ENCODE measurements at regions of chr15 and their contacts with region 1.

Region 1: GRCh38 chr15:101258238-101259144 is 6.6 kb upstream of the CHSY1 start:
- DNase-seq: peak; percentile 51
- ATAC-seq: peak; percentile 88
- H3K4me3 ChIP-seq: no peak overlapping the region
- H3K27ac ChIP-seq: no peak overlapping the region
- H3K4me1 ChIP-seq: peaks cover 9% of the 10 kb centered on the region
- H3K27me3 ChIP-seq: no peaks in the 10 kb centered on the region
- CTCF ChIP-seq: peak; percentile 76 to 95 (median 92); a peak in 5 of 6 replicates
- EP300 ChIP-seq: peak in 1 of 2 experiments; percentile 70; a peak in 2 of 4 replicates
- POLR2A ChIP-seq: no peak
- RAD21 ChIP-seq: peak; percentile 97

Region 2: DNA sequence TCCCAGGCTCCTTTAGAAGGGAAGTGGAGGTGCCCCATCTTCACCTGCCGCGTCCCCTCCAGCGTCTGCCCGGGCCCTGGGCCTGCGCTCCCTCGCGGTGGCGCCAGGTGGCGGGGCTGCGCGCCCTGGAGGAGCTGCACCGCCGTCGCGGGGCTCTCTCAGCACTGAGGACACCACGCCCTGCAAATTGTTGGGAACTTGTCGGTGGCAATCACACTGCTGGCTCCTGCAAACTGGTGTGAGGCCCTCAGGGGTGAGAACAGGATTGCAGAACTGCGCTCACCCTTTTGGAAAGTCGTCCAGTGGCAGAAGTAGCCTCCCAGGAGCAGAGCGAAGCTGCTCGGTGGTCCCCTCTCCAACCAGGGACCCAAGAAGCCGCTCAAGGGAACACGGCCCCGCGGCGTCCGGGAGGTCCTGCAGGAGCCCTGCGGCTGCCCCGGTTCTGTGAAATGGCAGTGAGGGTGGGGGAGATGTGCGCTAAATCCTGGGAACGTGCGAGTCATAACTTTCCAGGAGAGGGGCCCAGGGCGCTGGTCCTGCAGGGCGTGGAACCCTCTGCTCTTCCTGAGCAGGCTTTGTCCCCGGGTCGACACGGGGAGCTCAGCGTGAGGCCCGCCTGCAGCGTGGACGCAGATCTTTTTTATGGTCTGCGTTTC is 340.3 kb before region 1 on chr15:
- CTCF ChIA-PET with region 1: interaction called, 17 read pairs
- POLR2A ChIA-PET with region 1: no interaction called
- RAD21 ChIA-PET with region 1: interaction called, 4 read pairs
- SMC1A ChIA-PET with region 1: interaction called, 19 read pairs
- in situ Hi-C with region 1: loop called (anchors 5 kb)
- intact Hi-C with region 1: loop called (anchors 5 kb)
- DNase-seq: no peak
- ATAC-seq: peak; percentile 83
- H3K4me3 ChIP-seq: peak overlapping the region; percentile 89
- H3K27ac ChIP-seq: peak overlapping the region; percentile 83
- H3K4me1 ChIP-seq: peaks cover 21% of the 10 kb centered on the region
- H3K27me3 ChIP-seq: no peaks in the 10 kb centered on the region
- CTCF ChIP-seq: peak; percentile 93 to 98 (median 96)
- EP300 ChIP-seq: no peak
- POLR2A ChIP-seq: peak; percentile 46; the same call in 1 of the 2 replicates
- RAD21 ChIP-seq: peak; percentile 87

Region 3: DNA sequence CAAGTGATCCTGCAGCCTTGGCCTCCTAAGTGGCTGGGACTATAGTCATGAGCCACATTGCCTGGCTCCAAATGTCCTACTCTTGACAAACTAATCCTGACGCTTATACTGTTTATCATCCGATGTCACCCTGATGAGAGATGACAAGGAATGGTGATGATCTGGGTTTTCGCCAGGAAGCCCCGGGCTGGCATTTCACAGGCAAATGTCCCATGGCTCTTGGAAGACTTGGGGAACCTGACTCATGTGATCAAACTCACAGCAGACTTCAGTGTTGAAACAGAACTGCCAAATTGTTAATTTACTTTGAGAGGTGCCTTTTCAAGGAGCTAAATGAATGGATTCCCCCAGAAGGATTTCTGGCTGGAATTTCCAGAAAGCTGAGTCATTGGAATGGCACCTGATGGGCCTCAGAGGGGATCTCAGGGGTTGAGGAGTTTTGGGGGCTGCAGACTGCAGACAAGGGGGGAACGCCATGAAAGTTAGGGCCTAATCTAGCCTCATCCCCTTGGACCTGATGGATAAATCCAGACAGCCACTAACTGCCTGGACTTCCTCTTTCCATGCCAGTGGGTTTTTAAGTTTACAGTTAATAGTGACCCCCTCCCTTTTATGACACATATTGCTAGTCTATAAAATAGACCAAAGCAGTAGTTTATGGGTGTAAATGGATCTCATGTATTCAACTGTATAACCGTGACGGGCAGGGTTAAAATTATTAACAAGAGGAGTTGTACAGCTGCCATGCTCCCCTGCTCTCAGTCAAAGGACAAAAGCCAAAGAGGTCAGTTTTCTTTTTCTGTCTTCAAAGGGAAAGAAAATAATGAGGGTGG is 153.2 kb before region 1 on chr15:
- CTCF ChIA-PET with region 1: interaction called, 22 read pairs
- POLR2A ChIA-PET with region 1: interaction called, 4 read pairs
- RAD21 ChIA-PET with region 1: interaction called, 10 read pairs
- SMC1A ChIA-PET with region 1: interaction called, 5 read pairs
- in situ Hi-C with region 1: no loop called
- intact Hi-C with region 1: no loop called
- DNase-seq: no peak
- ATAC-seq: no peak
- H3K4me3 ChIP-seq: no peak overlapping the region
- H3K27ac ChIP-seq: no peak overlapping the region
- H3K4me1 ChIP-seq: no peaks in the 10 kb centered on the region
- H3K27me3 ChIP-seq: no peaks in the 10 kb centered on the region; a peak in 1 of 4 replicates
- CTCF ChIP-seq: no peak
- EP300 ChIP-seq: no peak
- POLR2A ChIP-seq: no peak
- RAD21 ChIP-seq: no peak

Region 4: DNA sequence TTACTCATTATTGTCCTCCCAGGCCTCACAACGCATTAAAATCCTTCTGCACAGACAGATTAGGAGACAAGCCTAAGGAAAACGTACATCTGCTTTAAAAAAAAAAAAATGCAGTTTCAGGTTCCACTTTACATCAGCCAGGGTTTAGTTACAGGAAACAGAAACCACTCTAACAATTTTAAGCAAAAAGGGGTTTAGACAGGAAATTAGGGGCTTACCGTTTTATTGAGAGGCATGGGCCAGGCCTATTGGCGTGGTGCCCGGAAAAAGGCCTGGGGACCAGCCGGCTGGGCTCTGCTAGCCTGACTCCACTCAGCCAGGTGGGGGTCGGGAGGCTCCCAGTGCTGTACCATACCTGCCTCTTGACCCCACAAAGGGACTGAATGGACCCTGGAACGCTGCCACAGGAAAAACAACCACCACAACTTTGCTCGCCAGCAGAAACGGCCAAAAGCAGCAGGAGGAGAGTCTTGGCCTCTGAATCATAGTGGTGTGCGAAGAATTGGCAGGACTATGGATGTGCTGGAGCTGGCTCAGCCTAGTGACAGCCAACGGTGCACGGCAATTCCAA is 130.9 kb before region 1 on chr15:
- CTCF ChIA-PET with region 1: interaction called, 60 read pairs
- POLR2A ChIA-PET with region 1: interaction called, 5 read pairs
- RAD21 ChIA-PET with region 1: interaction called, 12 read pairs
- SMC1A ChIA-PET with region 1: interaction called, 29 read pairs
- in situ Hi-C with region 1: no loop called
- intact Hi-C with region 1: no loop called
- DNase-seq: peak; percentile 82
- ATAC-seq: peak; percentile 80
- H3K4me3 ChIP-seq: peak overlapping the region; percentile 44; the same call in 1 of the 2 replicates
- H3K27ac ChIP-seq: peak overlapping the region; percentile 95
- H3K4me1 ChIP-seq: peaks cover 45% of the 10 kb centered on the region
- H3K27me3 ChIP-seq: no peaks in the 10 kb centered on the region; a peak in 1 of 4 replicates
- CTCF ChIP-seq: no peak
- EP300 ChIP-seq: peak; percentile 60 to 85; a peak in 2 of 4 replicates
- POLR2A ChIP-seq: no peak
- RAD21 ChIP-seq: no peak

Region 5: DNA sequence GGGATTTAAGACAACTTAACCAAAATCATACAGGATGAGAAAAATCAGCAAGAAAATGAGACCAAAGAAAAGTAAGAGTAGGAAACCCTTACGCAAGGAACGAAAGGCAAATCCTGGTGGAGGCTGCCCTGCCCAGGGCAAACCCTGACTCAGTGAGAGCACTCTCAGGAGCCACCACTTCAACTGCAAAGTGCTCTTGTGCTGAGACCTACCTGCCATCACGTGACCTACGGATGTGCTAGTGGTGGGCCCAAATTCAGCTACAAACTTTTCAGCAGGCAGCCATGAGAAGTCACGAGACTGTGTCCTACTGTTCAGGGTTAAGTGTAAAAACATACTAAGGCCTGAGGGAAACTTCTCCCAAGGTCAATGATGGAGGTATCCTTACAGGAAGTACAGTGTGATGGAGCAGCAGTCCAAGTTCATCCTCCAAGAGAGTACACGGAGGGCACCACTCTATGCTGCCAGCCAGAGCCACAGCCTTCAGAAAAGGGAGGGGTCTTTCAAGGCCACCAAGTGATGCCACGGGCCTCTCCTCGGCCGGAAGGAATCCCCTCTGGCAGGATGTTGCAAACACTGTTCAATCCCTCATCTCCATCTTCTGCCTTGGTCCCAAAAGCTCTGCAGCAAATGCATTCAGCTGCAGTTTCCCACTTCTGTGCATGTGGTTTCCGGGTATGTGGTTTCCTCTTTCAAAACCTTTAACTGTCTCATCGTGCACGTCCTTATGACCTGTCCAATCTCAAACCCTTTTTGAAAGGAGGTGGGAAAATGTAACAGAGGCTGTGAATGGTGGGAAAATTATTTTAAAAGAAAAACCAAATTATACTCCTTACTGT is 16.1 kb before region 1 on chr15:
- CTCF ChIA-PET with region 1: interaction called, 64 read pairs
- POLR2A ChIA-PET with region 1: interaction called, 3 read pairs
- RAD21 ChIA-PET with region 1: interaction called, 12 read pairs
- SMC1A ChIA-PET with region 1: interaction called, 13 read pairs
- in situ Hi-C with region 1: no loop called
- intact Hi-C with region 1: no loop called
- DNase-seq: peak; percentile 74
- ATAC-seq: peak; percentile 77
- H3K4me3 ChIP-seq: peak overlapping the region; percentile 44
- H3K27ac ChIP-seq: peak overlapping the region; percentile 69
- H3K4me1 ChIP-seq: peaks cover 43% of the 10 kb centered on the region
- H3K27me3 ChIP-seq: no peaks in the 10 kb centered on the region
- CTCF ChIP-seq: no peak
- EP300 ChIP-seq: peak in 1 of 2 experiments; percentile 74; a peak in 2 of 4 replicates
- POLR2A ChIP-seq: peak; percentile 12; the same call in 1 of the 2 replicates
- RAD21 ChIP-seq: no peak

Region 6: DNA sequence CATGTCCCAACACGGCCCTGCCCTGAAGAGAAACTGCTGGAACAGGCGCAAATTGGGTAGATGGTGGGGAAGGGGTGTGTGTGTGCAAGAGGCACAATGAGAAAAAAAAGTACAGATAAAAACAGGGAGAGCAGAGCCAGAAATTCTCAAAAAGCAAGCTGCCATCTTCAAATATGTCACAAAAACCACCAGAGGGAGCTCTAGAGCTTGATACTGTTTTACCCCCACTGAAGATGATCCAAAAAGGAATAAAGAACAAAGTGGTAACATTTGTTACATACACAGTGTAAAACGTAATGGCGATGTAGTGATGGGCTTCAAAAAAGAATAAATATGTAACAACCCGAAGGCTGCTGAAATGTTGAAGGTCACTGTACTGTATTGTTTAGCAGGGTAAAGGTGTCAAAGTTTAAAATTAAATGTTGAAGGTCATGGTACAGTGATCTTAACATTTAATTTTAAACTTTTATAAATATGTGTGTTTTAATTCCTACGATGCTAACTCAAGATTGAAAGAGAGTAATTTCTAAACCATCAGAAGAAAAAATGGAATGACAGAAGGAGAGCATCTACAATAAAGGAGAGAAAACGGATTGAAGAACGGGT is 30.5 kb after region 1 on chr15:
- CTCF ChIA-PET with region 1: interaction called, 18 read pairs
- POLR2A ChIA-PET with region 1: no interaction called
- RAD21 ChIA-PET with region 1: interaction called, 21 read pairs
- SMC1A ChIA-PET with region 1: interaction called, 8 read pairs
- in situ Hi-C with region 1: no loop called
- intact Hi-C with region 1: no loop called
- DNase-seq: no peak
- ATAC-seq: peak; percentile 48
- H3K4me3 ChIP-seq: no peak overlapping the region
- H3K27ac ChIP-seq: no peak overlapping the region
- H3K4me1 ChIP-seq: peaks cover 4% of the 10 kb centered on the region
- H3K27me3 ChIP-seq: no peaks in the 10 kb centered on the region
- CTCF ChIP-seq: peak; percentile 52 to 58 (median 53)
- EP300 ChIP-seq: no peak
- POLR2A ChIP-seq: no peak
- RAD21 ChIP-seq: peak; percentile 45

Region 7: GRCh38 chr15:101501703-101502373 is 243.3 kb after region 1 on chr15:
- CTCF ChIA-PET with region 1: no interaction called
- POLR2A ChIA-PET with region 1: no interaction called
- RAD21 ChIA-PET with region 1: no interaction called
- SMC1A ChIA-PET with region 1: no interaction called
- in situ Hi-C with region 1: no loop called
- intact Hi-C with region 1: no loop called
- DNase-seq: no peak
- ATAC-seq: peak; percentile 88
- H3K4me3 ChIP-seq: no peak overlapping the region
- H3K27ac ChIP-seq: no peak overlapping the region
- H3K4me1 ChIP-seq: peaks cover 8% of the 10 kb centered on the region
- H3K27me3 ChIP-seq: no peaks in the 10 kb centered on the region; a peak in 2 of 4 replicates
- CTCF ChIP-seq: peak; percentile 40 to 51 (median 50)
- EP300 ChIP-seq: no peak
- POLR2A ChIP-seq: no peak
- RAD21 ChIP-seq: peak; percentile 40; the same call in 1 of the 2 replicates